Naive thymus-derived CD4-positive, alpha-beta T cell (primary cell): ENCODE measurements at regions of chr7 and their contacts with region 1.

Region 1: DNA sequence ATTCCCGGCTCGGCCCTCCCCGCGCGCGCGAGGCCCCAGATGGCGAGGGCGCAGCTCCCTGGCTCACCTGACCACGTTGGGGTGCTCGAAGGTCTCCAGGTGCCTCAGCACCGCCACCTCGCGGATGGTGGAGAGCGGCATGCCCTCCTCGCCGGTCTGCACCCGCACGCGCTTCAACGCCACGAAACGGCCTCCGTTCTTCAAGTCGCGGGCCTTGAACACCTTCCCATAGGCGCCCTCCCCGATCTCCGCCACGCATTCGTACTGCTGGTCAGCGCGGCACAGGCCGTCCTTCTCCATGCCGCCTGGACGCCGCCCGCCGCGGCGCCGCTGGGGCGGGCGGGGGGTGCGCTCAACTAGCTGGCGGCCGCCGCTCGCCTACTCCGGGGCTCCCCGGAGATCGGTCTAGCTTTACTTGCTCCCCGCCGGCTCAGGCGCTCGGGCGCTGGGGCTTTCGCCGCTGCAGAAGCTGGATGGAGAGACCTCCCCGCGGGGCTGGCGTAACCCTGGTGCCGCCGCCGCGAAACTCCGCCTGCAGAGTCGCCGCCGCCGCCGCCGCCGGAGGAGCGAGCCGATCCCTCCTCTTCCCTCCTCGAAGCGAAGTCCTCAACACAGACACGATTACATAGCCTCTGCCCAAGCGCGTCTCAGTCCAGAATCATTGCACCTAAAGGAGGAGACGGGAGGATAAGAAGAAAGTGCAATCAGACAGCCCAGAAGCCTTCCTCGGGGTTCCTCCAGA is 3.2 kb downstream of the CDK6 start:
- DNase-seq: peak; percentile 73 to 88 (median 84)
- ATAC-seq: peak; percentile 86
- H3K4me3 ChIP-seq: peak overlapping the region; percentile 77
- H3K4me3 Mint-ChIP-seq: peak overlapping the region; percentile 91 to 99 (median 96)
- H3K27ac ChIP-seq: peak overlapping the region; percentile 73
- H3K27ac Mint-ChIP-seq: peak overlapping the region; percentile 78 to 99 (median 90)
- H3K4me1 ChIP-seq: peaks cover 27 to 29% of the 10 kb centered on the region in 2 donors
- H3K4me1 Mint-ChIP-seq: peaks cover 12 to 60% (median 51%) of the 10 kb centered on the region in 7 donors
- H3K27me3 ChIP-seq: no peaks in the 10 kb centered on the region
- H3K27me3 Mint-ChIP-seq: peaks cover 0 to 13% (median 0%) of the 10 kb centered on the region in 5 donors

Region 2: GRCh38 chr7:92245487-92246362 is 587.5 kb before region 1 on chr7 and contains the starts of genes ANKIB1 and KRIT1:
- CTCF ChIA-PET with region 1: no interaction called
- POLR2A ChIA-PET with region 1: no interaction called
- intact Hi-C with region 1: loop called in 1 of 2 experiments (anchors 5 kb)
- DNase-seq: peak; percentile 68 to 88 (median 86)
- ATAC-seq: peak; percentile 87
- H3K4me3 ChIP-seq: peak within 1 kb of the TSS; percentile 80
- H3K4me3 Mint-ChIP-seq: peak within 1 kb of the TSS; percentile 97 to 100 (median 98)
- H3K27ac ChIP-seq: peak within 1 kb of the TSS; percentile 92
- H3K27ac Mint-ChIP-seq: peak within 1 kb of the TSS; percentile 98 to 100 (median 100)
- H3K4me1 ChIP-seq: peaks cover 15 to 22% of the 10 kb centered on the region in 2 donors
- H3K4me1 Mint-ChIP-seq: peaks cover 30 to 64% (median 45%) of the 10 kb centered on the region in 7 donors
- H3K27me3 ChIP-seq: no peaks in the 10 kb centered on the region
- H3K27me3 Mint-ChIP-seq: no peaks in the 10 kb centered on the region
- total RNA-seq, gene ANKIB1: 54.8 to 98.6 (median 68.2) TPM
- total RNA-seq, gene KRIT1: 45.7 to 78.7 (median 48.6) TPM

Region 3: DNA sequence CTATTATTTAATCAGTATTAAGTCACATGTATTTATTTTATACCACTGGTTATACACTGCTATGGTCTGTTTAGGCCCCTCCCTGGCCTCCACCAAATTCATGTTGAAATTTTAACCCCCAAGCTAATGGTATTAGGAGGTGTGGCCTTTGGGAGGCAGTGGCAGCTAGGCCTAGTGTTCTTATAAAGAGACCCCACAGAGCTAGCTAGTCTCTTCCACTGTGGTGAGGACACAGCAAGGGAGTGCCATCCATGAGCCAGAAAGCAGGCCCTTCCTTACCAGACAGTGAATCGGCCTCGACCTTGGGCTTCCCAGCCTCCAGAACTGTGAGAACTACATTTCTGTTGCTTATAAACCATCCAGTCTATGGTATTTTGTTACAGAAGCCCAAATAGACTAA is 275.9 kb before region 1 on chr7:
- CTCF ChIA-PET with region 1: no interaction called
- POLR2A ChIA-PET with region 1: no interaction called
- intact Hi-C with region 1: no loop called
- DNase-seq: no peak
- ATAC-seq: no peak
- H3K4me3 ChIP-seq: no peak overlapping the region
- H3K4me3 Mint-ChIP-seq: no peak overlapping the region
- H3K27ac ChIP-seq: no peak overlapping the region
- H3K27ac Mint-ChIP-seq: peak overlapping the region in 2 of 9 donors; percentile 43 to 62
- H3K4me1 ChIP-seq: no peaks in the 10 kb centered on the region
- H3K4me1 Mint-ChIP-seq: no peaks in the 10 kb centered on the region
- H3K27me3 ChIP-seq: no peaks in the 10 kb centered on the region
- H3K27me3 Mint-ChIP-seq: no peaks in the 10 kb centered on the region

Region 4: DNA sequence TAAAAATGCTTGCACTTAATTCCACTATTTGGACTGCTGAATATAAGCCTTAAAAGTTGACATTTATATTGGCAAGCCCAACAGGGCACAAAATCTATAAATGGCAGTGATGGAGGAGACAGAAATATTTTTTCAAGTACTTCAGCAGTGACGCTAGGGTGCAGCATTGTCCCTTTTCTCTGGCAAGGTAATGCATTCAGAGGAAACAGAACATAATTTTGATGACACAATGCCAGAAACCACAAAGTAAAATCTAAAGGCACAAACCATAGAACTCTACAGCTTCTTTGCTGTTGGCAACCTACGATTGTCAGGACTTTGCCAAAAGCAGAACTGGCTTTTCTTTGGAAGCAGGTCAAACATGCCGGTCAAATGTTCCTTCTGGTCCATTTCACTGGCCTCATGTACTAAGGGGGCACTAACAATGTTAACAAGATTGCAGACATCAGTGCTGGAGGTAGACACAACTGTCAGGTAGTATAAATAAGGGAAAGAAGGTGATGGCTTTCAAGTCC is 212.1 kb before region 1 on chr7:
- CTCF ChIA-PET with region 1: interaction called, 18 read pairs
- POLR2A ChIA-PET with region 1: interaction called, 3 read pairs
- intact Hi-C with region 1: loop called (anchors 1 kb)
- DNase-seq: peak; percentile 39 to 84 (median 73)
- ATAC-seq: peak; percentile 96
- H3K4me3 ChIP-seq: no peak overlapping the region
- H3K4me3 Mint-ChIP-seq: peak overlapping the region in 9 of 10 donors; percentile 15 to 84 (median 54)
- H3K27ac ChIP-seq: peak overlapping the region; percentile 24
- H3K27ac Mint-ChIP-seq: peak overlapping the region; percentile 17 to 92 (median 84)
- H3K4me1 ChIP-seq: peaks cover 6 to 20% of the 10 kb centered on the region in 2 donors
- H3K4me1 Mint-ChIP-seq: peaks cover 8 to 58% (median 33%) of the 10 kb centered on the region in 7 donors
- H3K27me3 ChIP-seq: no peaks in the 10 kb centered on the region
- H3K27me3 Mint-ChIP-seq: no peaks in the 10 kb centered on the region

Region 5: GRCh38 chr7:92768501-92769393 is 64.4 kb before region 1 on chr7:
- CTCF ChIA-PET with region 1: no interaction called
- POLR2A ChIA-PET with region 1: no interaction called
- intact Hi-C with region 1: loop called in 1 of 2 experiments (anchors 5 kb)
- DNase-seq: peak in 1 of 9 donors; percentile 29
- ATAC-seq: no peak
- H3K4me3 ChIP-seq: no peak overlapping the region
- H3K4me3 Mint-ChIP-seq: peak overlapping the region in 1 of 10 donors; percentile 45
- H3K27ac ChIP-seq: no peak overlapping the region
- H3K27ac Mint-ChIP-seq: peak overlapping the region in 4 of 9 donors; percentile 26 to 69 (median 39)
- H3K4me1 ChIP-seq: no peaks in the 10 kb centered on the region
- H3K4me1 Mint-ChIP-seq: peaks cover 24 to 59% (median 32%) of the 10 kb centered on the region in 7 donors
- H3K27me3 ChIP-seq: no peaks in the 10 kb centered on the region
- H3K27me3 Mint-ChIP-seq: no peaks in the 10 kb centered on the region

Region 6: DNA sequence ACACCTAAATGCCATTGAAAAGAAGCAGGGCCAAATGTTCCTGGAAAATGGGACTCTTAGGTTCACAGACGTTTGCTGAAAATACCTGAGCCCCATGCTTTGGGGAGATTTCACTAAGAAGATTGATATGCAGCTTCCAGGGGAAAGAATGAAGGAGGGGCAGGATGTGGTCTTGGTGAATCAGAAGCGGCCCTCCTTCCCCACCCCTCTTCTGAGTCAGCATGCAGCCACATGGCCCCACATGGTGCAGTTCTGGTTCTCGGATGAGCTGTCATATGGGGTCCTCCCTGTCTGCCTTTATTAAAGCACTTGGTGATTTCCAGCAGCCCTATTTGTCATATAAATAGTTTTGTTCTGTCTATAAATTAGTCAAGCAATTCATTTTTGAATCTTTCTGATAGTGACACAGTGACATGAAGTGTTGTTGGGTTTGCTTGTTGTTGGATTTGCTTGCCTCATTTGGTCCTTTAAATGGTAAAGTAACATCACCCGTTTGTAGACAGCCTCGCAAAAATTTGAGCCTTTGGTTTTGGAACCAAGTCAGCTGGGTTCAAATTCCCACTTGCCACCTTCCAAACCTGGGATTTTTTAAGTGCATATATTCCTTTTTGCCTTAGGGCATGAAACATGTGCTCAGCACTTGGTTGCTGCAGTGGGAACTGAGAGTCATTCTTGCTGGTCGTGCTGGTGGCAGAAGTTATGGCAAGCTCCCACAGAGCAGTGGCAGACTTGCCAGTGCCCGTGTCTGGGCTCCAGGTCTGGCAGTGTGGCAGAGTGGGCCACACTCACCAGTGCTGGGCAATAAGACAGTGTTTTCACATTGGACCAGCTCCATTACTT is 71.3 kb after region 1 on chr7:
- CTCF ChIA-PET with region 1: interaction called, 3 read pairs
- POLR2A ChIA-PET with region 1: interaction called, 3 read pairs
- intact Hi-C with region 1: loop called (anchors 1 kb)
- DNase-seq: peak in 8 of 9 donors; percentile 21 to 80 (median 42)
- ATAC-seq: peak; percentile 99
- H3K4me3 ChIP-seq: no peak overlapping the region
- H3K4me3 Mint-ChIP-seq: peak overlapping the region in 1 of 10 donors; percentile 44
- H3K27ac ChIP-seq: no peak overlapping the region
- H3K27ac Mint-ChIP-seq: peak overlapping the region in 2 of 9 donors; percentile 39 to 83
- H3K4me1 ChIP-seq: peaks cover 0 to 7% of the 10 kb centered on the region in 2 donors
- H3K4me1 Mint-ChIP-seq: peaks cover 0 to 23% (median 12%) of the 10 kb centered on the region in 7 donors
- H3K27me3 ChIP-seq: no peaks in the 10 kb centered on the region
- H3K27me3 Mint-ChIP-seq: peaks cover 0 to 5% (median 0%) of the 10 kb centered on the region in 5 donors

Region 7: DNA sequence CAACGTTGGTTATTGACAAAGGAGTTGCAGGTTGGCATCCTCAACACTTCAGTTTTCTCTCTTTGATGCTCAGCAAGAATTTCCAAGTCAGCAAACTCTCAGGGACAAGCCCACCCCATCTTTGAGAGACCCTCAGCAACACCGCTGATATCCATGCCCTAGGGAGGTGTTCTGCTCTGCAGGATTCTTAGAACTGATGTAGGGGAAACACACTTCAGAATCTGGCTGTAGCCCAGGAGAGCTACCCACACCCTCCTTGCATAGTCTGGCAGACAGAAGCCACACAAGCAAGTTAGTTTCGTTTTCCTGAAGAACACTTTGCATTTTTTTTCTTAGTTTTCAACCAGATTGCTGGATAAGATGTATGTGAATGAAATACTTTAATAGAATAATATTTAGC is 314.2 kb after region 1 on chr7:
- CTCF ChIA-PET with region 1: no interaction called
- POLR2A ChIA-PET with region 1: no interaction called
- intact Hi-C with region 1: loop called (anchors 5 kb)
- DNase-seq: peak in 8 of 9 donors; percentile 30 to 51 (median 39)
- ATAC-seq: peak; percentile 76
- H3K4me3 ChIP-seq: peak overlapping the region; percentile 68
- H3K4me3 Mint-ChIP-seq: peak overlapping the region; percentile 84 to 98 (median 94)
- H3K27ac ChIP-seq: peak overlapping the region; percentile 69
- H3K27ac Mint-ChIP-seq: peak overlapping the region; percentile 86 to 96 (median 92)
- H3K4me1 ChIP-seq: peaks cover 13 to 21% of the 10 kb centered on the region in 2 donors
- H3K4me1 Mint-ChIP-seq: peaks cover 29 to 51% (median 36%) of the 10 kb centered on the region in 7 donors
- H3K27me3 ChIP-seq: no peaks in the 10 kb centered on the region
- H3K27me3 Mint-ChIP-seq: no peaks in the 10 kb centered on the region

Region 8: GRCh38 chr7:94657771-94658693 is 1824.8 kb after region 1 on chr7:
- CTCF ChIA-PET with region 1: no interaction called
- POLR2A ChIA-PET with region 1: no interaction called
- intact Hi-C with region 1: loop called in 1 of 2 experiments (anchors 5 kb)
- DNase-seq: peak; percentile 83 to 97 (median 95)
- ATAC-seq: peak; percentile 88
- H3K4me3 ChIP-seq: peak overlapping the region; percentile 85
- H3K4me3 Mint-ChIP-seq: peak overlapping the region; percentile 83 to 91 (median 88)
- H3K27ac ChIP-seq: no peak overlapping the region
- H3K27ac Mint-ChIP-seq: peak overlapping the region in 6 of 9 donors; percentile 17 to 84 (median 54)
- H3K4me1 ChIP-seq: peaks cover 15 to 16% of the 10 kb centered on the region in 2 donors
- H3K4me1 Mint-ChIP-seq: peaks cover 8 to 24% (median 17%) of the 10 kb centered on the region in 7 donors
- H3K27me3 ChIP-seq: peaks cover 14 to 21% of the 10 kb centered on the region in 2 donors
- H3K27me3 Mint-ChIP-seq: peaks cover 11 to 28% (median 23%) of the 10 kb centered on the region in 5 donors